CD4-positive, alpha-beta memory T cell (primary cell): ENCODE measurements at regions of chr17 and their contacts with region 1.

Region 1: DNA sequence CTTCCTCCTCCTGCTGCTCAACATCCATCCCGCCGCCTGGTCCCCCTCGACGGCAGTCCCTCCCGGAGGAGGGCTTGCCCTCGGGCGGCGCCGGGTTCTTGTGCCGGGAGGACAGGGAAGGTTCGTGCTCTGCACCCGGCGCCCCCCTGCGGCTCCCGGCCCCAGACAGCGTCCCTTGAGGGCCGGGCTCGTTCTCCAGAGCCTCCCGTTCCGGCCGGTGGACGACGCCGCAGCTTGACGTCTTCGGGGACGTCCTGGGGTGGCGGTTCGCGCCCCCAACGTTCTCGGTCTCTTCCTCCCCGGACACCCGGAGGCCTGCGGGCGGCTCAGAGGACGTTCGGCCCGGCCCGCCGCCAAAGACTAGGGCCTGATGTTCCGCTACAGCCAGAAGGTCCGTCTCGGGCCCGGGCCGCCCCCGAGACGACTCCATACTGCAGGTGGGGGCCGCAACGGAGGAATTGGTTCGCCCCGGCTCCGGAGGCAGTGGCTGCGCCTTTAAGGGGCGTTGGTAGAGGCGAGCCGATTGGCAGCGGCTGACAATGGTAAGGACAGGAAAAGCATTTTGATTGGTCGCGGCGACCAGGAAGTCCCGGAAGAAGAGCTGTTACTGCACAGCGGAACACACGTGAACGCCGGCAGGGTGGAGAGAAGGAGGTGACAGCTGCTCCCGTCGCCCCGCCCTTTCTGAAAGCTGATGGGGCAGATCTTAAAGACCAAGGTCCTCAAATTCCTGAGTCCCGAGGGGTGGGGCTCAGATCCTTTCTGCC is at the start of gene BORCS6:
- DNase-seq: peak; percentile 93 to 98 (median 96)
- H3K4me3 ChIP-seq: peak within 1 kb of the TSS; percentile 76 to 100
- H3K4me3 Mint-ChIP-seq: peak within 1 kb of the TSS in 5 of 8 donors; percentile 13 to 92 (median 41)
- H3K27ac ChIP-seq: peak within 1 kb of the TSS; percentile 82
- H3K27ac Mint-ChIP-seq: peak within 1 kb of the TSS in 5 of 7 donors; percentile 78 to 94 (median 91)
- H3K4me1 ChIP-seq: peaks cover 44% of the 10 kb centered on the region
- H3K4me1 Mint-ChIP-seq: peaks cover 7 to 15% (median 13%) of the 10 kb centered on the region in 4 donors
- H3K27me3 ChIP-seq: no peaks in the 10 kb centered on the region
- H3K27me3 Mint-ChIP-seq: no peaks in the 10 kb centered on the region
- total RNA-seq, gene BORCS6: 19.2 to 19.4 TPM

Region 2: DNA sequence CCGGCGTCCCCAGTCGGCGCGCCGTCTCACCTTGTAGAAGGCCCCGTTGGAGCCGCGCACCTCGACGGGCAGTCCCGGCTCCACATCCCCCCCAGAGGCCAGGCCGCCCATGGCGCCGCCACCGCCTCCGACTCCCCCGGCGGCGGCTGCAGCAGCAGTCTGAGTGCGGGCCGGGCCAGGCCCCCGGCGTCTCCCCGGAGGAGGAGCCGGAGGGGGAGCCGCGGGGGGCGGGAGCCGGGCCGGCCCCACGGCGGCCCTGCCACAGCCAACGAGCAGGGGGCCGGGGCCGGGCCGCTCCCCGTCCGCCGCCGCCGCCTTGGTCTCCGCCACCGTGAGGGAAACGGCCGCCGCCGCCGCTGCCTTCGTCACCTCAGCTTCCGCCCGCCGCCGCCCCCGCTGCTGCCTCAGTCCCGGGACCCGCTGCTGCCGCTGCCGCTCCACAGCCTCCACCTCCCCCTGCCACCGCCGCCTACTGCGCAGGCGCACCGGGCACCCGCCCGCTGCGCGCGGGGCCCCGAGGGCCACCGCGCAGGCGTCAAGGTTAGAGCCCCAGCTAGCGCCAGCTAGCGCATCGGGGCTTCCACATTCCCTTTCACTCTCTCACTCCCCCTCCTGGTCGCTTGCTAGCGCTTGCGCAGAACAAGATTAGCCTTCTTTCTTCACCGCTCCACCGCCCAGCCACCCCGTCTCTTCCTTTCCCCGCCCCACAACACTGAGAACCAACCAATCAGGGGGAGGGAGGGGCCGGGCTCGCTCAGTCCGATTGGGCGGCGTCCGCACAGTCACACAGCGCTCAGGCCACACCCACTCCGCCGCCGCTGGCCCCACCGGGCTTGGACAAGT is 575.3 kb before region 1 on chr17 and contains the start of gene FXR2:
- CTCF ChIA-PET with region 1: no interaction called
- POLR2A ChIA-PET with region 1: no interaction called
- intact Hi-C with region 1: no loop called
- DNase-seq: peak; percentile 98 to 100 (median 99)
- H3K4me3 ChIP-seq: peak within 1 kb of the TSS; percentile 74 to 78
- H3K4me3 Mint-ChIP-seq: peak within 1 kb of the TSS; percentile 87 to 95 (median 93)
- H3K27ac ChIP-seq: peak within 1 kb of the TSS; percentile 66
- H3K27ac Mint-ChIP-seq: peak within 1 kb of the TSS; percentile 83 to 98 (median 97)
- H3K4me1 ChIP-seq: peaks cover 42% of the 10 kb centered on the region
- H3K4me1 Mint-ChIP-seq: peaks cover 22 to 49% (median 36%) of the 10 kb centered on the region in 4 donors
- H3K27me3 ChIP-seq: no peaks in the 10 kb centered on the region
- H3K27me3 Mint-ChIP-seq: no peaks in the 10 kb centered on the region
- total RNA-seq, gene FXR2: 44.1 to 46.6 TPM

Region 3: DNA sequence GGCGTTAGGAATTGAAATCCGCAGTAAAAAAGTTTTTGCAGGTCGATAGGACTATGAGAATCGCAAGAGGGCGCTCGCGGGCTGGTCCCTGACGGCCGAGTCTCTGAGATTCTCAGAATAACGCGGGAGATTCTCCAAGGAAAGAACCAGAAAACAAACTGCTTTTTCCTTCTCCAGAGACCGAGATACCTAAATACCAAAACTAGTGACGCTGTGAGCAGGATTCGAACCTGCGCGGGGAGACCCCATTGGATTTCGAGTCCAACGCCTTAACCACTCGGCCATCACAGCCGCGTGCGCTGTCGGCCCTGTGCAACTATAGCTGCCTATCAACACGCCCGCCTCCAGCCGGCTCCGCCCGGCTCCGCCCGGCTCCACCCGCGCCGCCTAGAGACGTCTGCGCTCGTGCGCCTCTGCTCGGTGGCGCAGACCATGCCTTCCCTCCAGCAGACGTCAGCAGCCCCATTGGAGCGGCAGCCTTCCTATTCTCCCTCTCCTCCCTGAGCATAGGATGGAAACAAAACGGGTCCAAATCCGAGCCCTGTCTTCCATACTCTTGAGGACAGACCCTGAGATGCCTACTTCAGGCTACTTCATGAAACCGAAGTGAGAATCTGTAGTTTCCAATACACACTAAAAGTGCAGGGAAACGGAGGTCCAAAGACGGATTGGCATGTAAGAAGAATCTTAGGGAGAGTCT is 51.1 kb before region 1 on chr17:
- CTCF ChIA-PET with region 1: interaction called, 22 read pairs
- POLR2A ChIA-PET with region 1: interaction called, 1,074 read pairs
- intact Hi-C with region 1: loop called (anchors 1 kb)
- DNase-seq: peak; percentile 95 to 98 (median 96)
- H3K4me3 ChIP-seq: peak overlapping the region; percentile 60 to 74
- H3K4me3 Mint-ChIP-seq: no peak overlapping the region
- H3K27ac ChIP-seq: peak overlapping the region; percentile 78
- H3K27ac Mint-ChIP-seq: no peak overlapping the region
- H3K4me1 ChIP-seq: peaks cover 20% of the 10 kb centered on the region
- H3K4me1 Mint-ChIP-seq: peaks cover 0 to 8% (median 3%) of the 10 kb centered on the region in 4 donors
- H3K27me3 ChIP-seq: no peaks in the 10 kb centered on the region
- H3K27me3 Mint-ChIP-seq: no peaks in the 10 kb centered on the region

Region 4: DNA sequence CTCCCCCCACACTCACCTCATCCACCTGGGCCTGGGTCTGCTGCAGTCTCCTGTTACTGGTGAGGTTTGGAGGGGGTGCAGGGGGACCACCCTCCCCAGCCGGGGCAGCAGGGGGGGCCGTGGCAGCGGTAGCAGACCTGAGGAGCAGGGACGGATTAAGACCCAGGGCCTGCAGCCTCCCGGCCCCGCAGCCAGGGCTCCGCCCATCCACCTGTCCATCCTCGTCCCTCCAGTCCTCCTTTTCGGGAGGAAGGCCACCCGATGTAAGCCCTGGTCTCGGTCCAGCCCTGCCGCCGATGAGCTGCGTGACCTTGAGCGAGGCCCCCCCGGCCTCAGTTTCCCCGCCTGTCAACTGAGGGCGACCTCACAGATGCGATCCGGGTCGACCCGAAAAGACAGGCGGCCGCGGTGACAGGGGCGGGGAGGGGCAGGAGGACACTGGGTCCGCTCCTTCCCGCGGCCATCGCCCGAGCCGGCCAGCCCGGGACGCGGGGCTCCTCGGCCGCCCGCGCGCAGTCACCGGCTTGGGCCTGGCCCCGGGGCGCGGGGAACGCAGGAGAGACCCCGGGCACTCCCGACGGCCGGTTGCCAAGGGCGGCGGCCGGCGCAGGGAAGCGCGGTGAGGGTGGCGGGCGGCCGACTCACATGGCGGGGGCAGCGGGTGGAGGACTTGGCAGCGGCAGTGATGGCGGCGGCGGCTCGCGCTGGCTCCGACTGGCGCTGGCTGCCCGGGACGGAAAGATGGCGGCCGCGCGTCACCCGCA is 27.5 kb before region 1 on chr17 and contains the start of gene VAMP2:
- CTCF ChIA-PET with region 1: interaction called, 13 read pairs
- POLR2A ChIA-PET with region 1: interaction called, 1,074 read pairs
- intact Hi-C with region 1: loop called (anchors 1 kb)
- DNase-seq: peak; percentile 84 to 90 (median 89)
- H3K4me3 ChIP-seq: peak within 1 kb of the TSS; percentile 80 to 98
- H3K4me3 Mint-ChIP-seq: peak within 1 kb of the TSS; percentile 91 to 93 (median 91)
- H3K27ac ChIP-seq: peak within 1 kb of the TSS; percentile 100
- H3K27ac Mint-ChIP-seq: peak within 1 kb of the TSS; percentile 95 to 99 (median 98)
- H3K4me1 ChIP-seq: peaks cover 68% of the 10 kb centered on the region
- H3K4me1 Mint-ChIP-seq: peaks cover 47 to 66% (median 53%) of the 10 kb centered on the region in 4 donors
- H3K27me3 ChIP-seq: no peaks in the 10 kb centered on the region
- H3K27me3 Mint-ChIP-seq: no peaks in the 10 kb centered on the region
- total RNA-seq, gene VAMP2: 190 to 203 TPM

Region 5: GRCh38 chr17:8204761-8205555 is 15.1 kb after region 1 on chr17:
- CTCF ChIA-PET with region 1: interaction called, 4 read pairs
- POLR2A ChIA-PET with region 1: interaction called, 54 read pairs
- intact Hi-C with region 1: loop called (anchors 1 kb)
- DNase-seq: no peak
- H3K4me3 ChIP-seq: no peak overlapping the region
- H3K4me3 Mint-ChIP-seq: no peak overlapping the region
- H3K27ac ChIP-seq: no peak overlapping the region
- H3K27ac Mint-ChIP-seq: peak overlapping the region in 2 of 7 donors; percentile 9 to 43
- H3K4me1 ChIP-seq: peaks cover 9% of the 10 kb centered on the region
- H3K4me1 Mint-ChIP-seq: peaks cover 7 to 8% (median 7%) of the 10 kb centered on the region in 4 donors
- H3K27me3 ChIP-seq: no peaks in the 10 kb centered on the region
- H3K27me3 Mint-ChIP-seq: peaks cover 0 to 1% of the 10 kb centered on the region in 2 donors

Region 6: GRCh38 chr17:8288336-8289102 is 98.6 kb after region 1 on chr17 and contains the start of gene RANGRF:
- CTCF ChIA-PET with region 1: no interaction called
- POLR2A ChIA-PET with region 1: interaction called, 35 read pairs
- intact Hi-C with region 1: no loop called
- DNase-seq: peak; percentile 70 to 83 (median 73)
- H3K4me3 ChIP-seq: peak within 1 kb of the TSS; percentile 88 to 98
- H3K4me3 Mint-ChIP-seq: peak within 1 kb of the TSS; percentile 93 to 98 (median 97)
- H3K27ac ChIP-seq: peak within 1 kb of the TSS; percentile 83
- H3K27ac Mint-ChIP-seq: peak within 1 kb of the TSS; percentile 94 to 98 (median 97)
- H3K4me1 ChIP-seq: peaks cover 49% of the 10 kb centered on the region
- H3K4me1 Mint-ChIP-seq: peaks cover 23 to 69% (median 44%) of the 10 kb centered on the region in 4 donors
- H3K27me3 ChIP-seq: no peaks in the 10 kb centered on the region
- H3K27me3 Mint-ChIP-seq: no peaks in the 10 kb centered on the region
- total RNA-seq, gene RANGRF: 39.7 to 42.8 TPM

Region 7: DNA sequence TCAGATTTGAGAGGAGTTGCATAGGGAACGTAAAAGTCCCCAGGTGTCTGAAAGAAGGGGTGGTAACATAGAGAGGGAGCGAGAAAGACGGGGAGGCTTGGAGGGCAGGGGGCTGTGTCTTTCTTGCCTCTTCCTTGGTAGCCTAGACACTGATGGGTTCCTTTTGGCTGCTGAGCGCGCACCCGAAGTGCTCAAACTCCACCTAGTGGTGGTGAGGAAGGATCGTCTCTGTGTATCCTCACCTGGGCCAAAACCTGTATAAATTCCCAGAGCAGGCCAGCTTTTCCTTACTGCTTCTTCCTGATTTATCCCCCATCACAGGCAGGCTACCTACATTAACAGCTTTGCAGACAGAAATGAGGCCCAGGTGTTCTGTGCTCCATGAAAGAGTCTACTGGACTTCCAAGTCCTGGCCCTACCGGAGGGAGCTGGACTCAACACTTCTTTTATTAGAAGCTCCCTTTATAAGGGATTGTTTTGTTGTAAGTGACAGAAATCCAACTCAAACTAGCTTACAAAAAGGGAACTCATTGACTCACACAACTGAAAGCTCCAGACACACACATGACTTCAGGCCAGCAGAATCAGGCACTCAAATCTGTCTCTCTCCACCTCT is 110.8 kb after region 1 on chr17:
- CTCF ChIA-PET with region 1: interaction called, 19 read pairs
- POLR2A ChIA-PET with region 1: interaction called, 48 read pairs
- intact Hi-C with region 1: loop called (anchors 1 kb)
- DNase-seq: peak; percentile 62 to 76 (median 72)
- H3K4me3 ChIP-seq: no peak overlapping the region
- H3K4me3 Mint-ChIP-seq: peak overlapping the region in 2 of 8 donors; percentile 2
- H3K27ac ChIP-seq: no peak overlapping the region
- H3K27ac Mint-ChIP-seq: peak overlapping the region in 6 of 7 donors; percentile 47 to 90 (median 83)
- H3K4me1 ChIP-seq: peaks cover 7% of the 10 kb centered on the region
- H3K4me1 Mint-ChIP-seq: peaks cover 7 to 16% (median 11%) of the 10 kb centered on the region in 4 donors
- H3K27me3 ChIP-seq: no peaks in the 10 kb centered on the region
- H3K27me3 Mint-ChIP-seq: peaks cover 0 to 1% of the 10 kb centered on the region in 2 donors

Region 8: DNA sequence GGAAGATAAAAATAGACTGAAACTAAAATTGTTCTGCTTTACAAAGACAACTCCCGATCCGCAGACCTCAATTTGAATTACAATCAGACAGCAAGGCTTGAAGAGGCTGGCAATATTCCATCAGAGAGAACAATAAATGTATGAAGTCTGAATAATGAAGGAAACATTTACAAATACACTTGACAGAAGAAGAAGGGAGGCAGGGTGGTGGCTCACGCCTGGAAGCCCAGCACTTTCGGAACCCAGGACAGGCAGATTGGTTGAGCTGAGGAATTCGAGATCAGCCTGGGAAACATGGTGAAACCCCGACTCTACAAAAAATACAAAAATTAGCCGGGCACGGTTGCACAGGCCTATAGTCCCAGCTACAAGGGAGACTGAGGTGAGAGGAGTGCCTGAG is 164.3 kb after region 1 on chr17:
- CTCF ChIA-PET with region 1: no interaction called
- POLR2A ChIA-PET with region 1: no interaction called
- intact Hi-C with region 1: no loop called
- DNase-seq: no peak
- H3K4me3 ChIP-seq: no peak overlapping the region
- H3K4me3 Mint-ChIP-seq: no peak overlapping the region
- H3K27ac ChIP-seq: no peak overlapping the region
- H3K27ac Mint-ChIP-seq: no peak overlapping the region
- H3K4me1 ChIP-seq: no peaks in the 10 kb centered on the region
- H3K4me1 Mint-ChIP-seq: peaks cover 0 to 4% (median 0%) of the 10 kb centered on the region in 4 donors
- H3K27me3 ChIP-seq: no peaks in the 10 kb centered on the region
- H3K27me3 Mint-ChIP-seq: peaks cover 3 to 6% of the 10 kb centered on the region in 2 donors